ENCODE measurements at regions of chr17 and their contacts with region 1.

Region 1: GRCh38 chr17:63974594-63975192 is 2.0 kb upstream of the SCN4A start:
- DNase-seq: peak in 1 of 3 donors; percentile 7
- H3K4me3 ChIP-seq: no peak overlapping the region
- H3K27ac ChIP-seq: no peak overlapping the region
- H3K4me1 ChIP-seq: peaks cover 0 to 36% (median 21%) of the 10 kb centered on the region in 4 experiments
- H3K27me3 ChIP-seq: no peaks in the 10 kb centered on the region

Region 2: GRCh38 chr17:63946440-63947367 is 28.0 kb before region 1 on chr17:
- CTCF ChIA-PET with region 1: interaction called, 14 read pairs
- POLR2A ChIA-PET with region 1: interaction called, 3 read pairs
- DNase-seq: peak; percentile 44 to 68 (median 63)
- H3K4me3 ChIP-seq: peak overlapping the region in 2 of 7 experiments; percentile 6 to 53
- H3K27ac ChIP-seq: no peak overlapping the region
- H3K4me1 ChIP-seq: peaks cover 0 to 37% (median 23%) of the 10 kb centered on the region in 4 experiments
- H3K27me3 ChIP-seq: no peaks in the 10 kb centered on the region

Region 3: DNA sequence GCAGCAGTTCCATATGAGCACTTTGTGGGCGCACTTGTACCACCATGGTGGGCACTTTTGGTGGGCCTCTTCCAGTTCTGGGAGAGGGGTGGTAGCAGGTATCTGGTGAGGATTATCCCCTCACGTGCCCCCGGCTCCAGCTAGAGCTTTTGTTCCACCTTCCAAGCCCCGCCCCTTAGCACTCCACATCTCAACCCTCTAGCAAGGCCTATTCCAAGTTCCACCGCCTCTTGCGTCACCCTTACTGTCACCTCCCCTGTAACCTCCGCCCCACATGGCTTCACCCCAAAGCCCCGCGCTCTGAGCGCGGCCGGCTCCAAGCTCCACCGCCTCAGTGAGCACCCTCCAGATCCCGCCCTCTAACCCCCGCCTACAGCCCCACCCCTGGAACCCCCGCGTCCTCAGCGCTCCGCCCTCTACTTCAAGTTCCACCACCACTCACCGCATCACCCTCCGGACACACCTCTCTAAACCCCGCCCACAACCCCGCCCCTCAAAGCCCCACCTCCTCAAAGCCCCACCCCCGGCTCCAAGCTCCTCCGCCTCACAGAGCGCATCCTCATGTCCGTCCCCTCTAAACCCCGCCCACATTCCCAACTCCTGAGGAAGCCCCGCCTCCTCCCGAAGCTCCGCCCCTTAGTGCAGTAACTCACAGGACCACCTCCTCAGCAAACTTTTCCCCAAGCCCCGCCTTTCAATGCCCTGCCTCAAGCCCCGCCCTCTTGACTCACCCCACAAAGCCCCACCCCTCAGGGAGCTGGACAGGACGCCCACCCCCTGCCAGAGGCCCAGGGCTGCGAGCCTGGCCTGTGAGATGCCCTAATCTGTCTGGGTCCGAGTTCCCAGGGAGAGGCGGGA is 13.1 kb before region 1 on chr17:
- CTCF ChIA-PET with region 1: interaction called, 14 read pairs
- POLR2A ChIA-PET with region 1: interaction called, 3 read pairs
- DNase-seq: peak; percentile 73 to 88 (median 85)
- H3K4me3 ChIP-seq: peak overlapping the region in 2 of 7 experiments; percentile 48 to 58
- H3K27ac ChIP-seq: no peak overlapping the region
- H3K4me1 ChIP-seq: peaks cover 0 to 14% (median 6%) of the 10 kb centered on the region in 4 experiments
- H3K27me3 ChIP-seq: no peaks in the 10 kb centered on the region